ENCODE measurements at regions of chr5 and their contacts with region 1.

Region 1: GRCh38 chr5:149317281-149318048 is 27.8 kb upstream of the GRPEL2 start:
- DNase-seq: peak; percentile 37
- H3K4me3 ChIP-seq: no peak overlapping the region
- H3K27ac ChIP-seq: no peak overlapping the region
- H3K4me1 ChIP-seq: peaks cover 20% of the 10 kb centered on the region
- H3K27me3 ChIP-seq: no peaks in the 10 kb centered on the region
- CTCF ChIP-seq: peak; percentile 74 to 75

Region 2: GRCh38 chr5:148882332-148882731 is 435.1 kb before region 1 on chr5:
- CTCF ChIA-PET with region 1: no interaction called
- dilution Hi-C with region 1: no loop called
- in situ Hi-C with region 1: no loop called
- intact Hi-C with region 1: no loop called
- DNase-seq: no peak
- H3K4me3 ChIP-seq: no peak overlapping the region
- H3K27ac ChIP-seq: no peak overlapping the region
- H3K4me1 ChIP-seq: no peaks in the 10 kb centered on the region
- H3K27me3 ChIP-seq: no peaks in the 10 kb centered on the region
- CTCF ChIP-seq: no peak

Region 3: DNA sequence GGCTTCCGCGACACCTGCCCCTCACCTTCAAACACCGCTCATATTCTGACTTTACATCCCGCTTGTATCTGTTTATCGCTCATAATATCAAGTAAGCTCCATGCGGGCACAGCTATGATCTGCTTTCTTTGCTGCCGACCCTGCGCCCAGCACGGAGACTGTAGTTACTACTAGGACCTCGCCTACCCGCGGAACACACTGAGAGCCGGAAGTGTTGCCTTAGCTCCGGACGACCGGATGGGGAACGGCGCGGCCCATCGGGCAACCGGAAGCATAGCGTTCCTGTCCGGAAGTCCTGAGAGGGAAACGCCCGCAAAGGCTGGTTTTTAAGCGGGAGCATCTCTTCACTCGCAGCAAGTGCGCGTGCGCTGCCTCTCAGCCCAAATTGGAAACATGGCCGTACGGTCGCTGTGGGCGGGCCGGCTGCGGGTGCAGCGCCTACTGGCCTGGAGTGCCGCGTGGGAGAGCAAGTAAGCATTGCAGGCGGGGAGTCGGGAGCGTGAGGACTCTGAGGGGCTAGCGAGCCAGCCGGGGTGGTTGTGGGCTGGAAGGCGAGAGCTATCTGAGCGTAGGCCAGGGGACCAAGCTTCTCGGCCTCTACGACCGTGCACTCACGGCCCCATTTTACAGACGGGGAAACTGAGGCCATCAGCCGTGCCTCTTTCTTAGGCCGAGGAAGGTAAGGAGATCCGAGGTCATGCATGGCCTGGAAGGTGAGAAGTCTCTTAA is 27.8 kb after region 1 on chr5 and contains the start of gene GRPEL2:
- CTCF ChIA-PET with region 1: no interaction called
- dilution Hi-C with region 1: no loop called
- in situ Hi-C with region 1: no loop called
- intact Hi-C with region 1: loop called (anchors 1 kb)
- DNase-seq: peak; percentile 95
- H3K4me3 ChIP-seq: peak within 1 kb of the TSS; percentile 77 to 99 (median 98)
- H3K27ac ChIP-seq: peak within 1 kb of the TSS; percentile 85
- H3K4me1 ChIP-seq: peaks cover 22% of the 10 kb centered on the region
- H3K27me3 ChIP-seq: no peaks in the 10 kb centered on the region
- CTCF ChIP-seq: no peak
- total RNA-seq, gene GRPEL2: 50.2 to 61.6 TPM

Region 4: GRCh38 chr5:149357370-149358293 is 40.2 kb after region 1 on chr5 and contains the start of gene PCYOX1L:
- CTCF ChIA-PET with region 1: interaction called, 4 read pairs
- dilution Hi-C with region 1: no loop called
- in situ Hi-C with region 1: no loop called
- intact Hi-C with region 1: loop called (anchors 5 kb)
- DNase-seq: peak; percentile 97
- H3K4me3 ChIP-seq: peak within 1 kb of the TSS; percentile 67 to 99 (median 81)
- H3K27ac ChIP-seq: no peak within 1 kb of the TSS
- H3K4me1 ChIP-seq: peaks cover 9% of the 10 kb centered on the region
- H3K27me3 ChIP-seq: no peaks in the 10 kb centered on the region
- CTCF ChIP-seq: no peak
- total RNA-seq, gene PCYOX1L: 6.8 to 10.2 TPM

Region 5: GRCh38 chr5:149367249-149367971 is 49.9 kb after region 1 on chr5:
- CTCF ChIA-PET with region 1: interaction called, 8 read pairs
- dilution Hi-C with region 1: no loop called
- in situ Hi-C with region 1: loop called in 1 of 2 experiments (anchors 5 kb)
- intact Hi-C with region 1: loop called (anchors 1 kb)
- DNase-seq: peak; percentile 54
- H3K4me3 ChIP-seq: no peak overlapping the region
- H3K27ac ChIP-seq: no peak overlapping the region
- H3K4me1 ChIP-seq: no peaks in the 10 kb centered on the region
- H3K27me3 ChIP-seq: no peaks in the 10 kb centered on the region
- CTCF ChIP-seq: peak; percentile 77 to 85

Region 6: GRCh38 chr5:149434162-149435014 is 116.9 kb after region 1 on chr5:
- CTCF ChIA-PET with region 1: interaction called, 3 read pairs
- dilution Hi-C with region 1: no loop called
- in situ Hi-C with region 1: loop called in 1 of 2 experiments (anchors 10 kb)
- intact Hi-C with region 1: loop called (anchors 1 kb)
- DNase-seq: no peak
- H3K4me3 ChIP-seq: no peak overlapping the region
- H3K27ac ChIP-seq: no peak overlapping the region
- H3K4me1 ChIP-seq: peaks cover 16% of the 10 kb centered on the region
- H3K27me3 ChIP-seq: no peaks in the 10 kb centered on the region
- CTCF ChIP-seq: peak; percentile 93

Measured in mammary epithelial cell (primary cell).